Activated CD8-positive, alpha-beta T cell treated with anti-CD3 and anti-CD28 coated beads, Interleukin-2, amount 10 ng/mL, durations not matched to agents 7 days and 5 days (primary cell): ENCODE measurements at regions of chr19 and their contacts with region 1.

Region 1: GRCh38 chr19:38618590-38619360 is at the start of gene EIF3K:
- DNase-seq: peak; percentile 98
- ATAC-seq: peak; percentile 58
- H3K4me3 Mint-ChIP-seq: peak within 1 kb of the TSS; percentile 100
- H3K27ac Mint-ChIP-seq: peak within 1 kb of the TSS; percentile 99
- H3K4me1 Mint-ChIP-seq: peaks cover 53% of the 10 kb centered on the region
- H3K27me3 Mint-ChIP-seq: no peaks in the 10 kb centered on the region
- total RNA-seq, gene EIF3K: 325 to 352 TPM

Region 2: DNA sequence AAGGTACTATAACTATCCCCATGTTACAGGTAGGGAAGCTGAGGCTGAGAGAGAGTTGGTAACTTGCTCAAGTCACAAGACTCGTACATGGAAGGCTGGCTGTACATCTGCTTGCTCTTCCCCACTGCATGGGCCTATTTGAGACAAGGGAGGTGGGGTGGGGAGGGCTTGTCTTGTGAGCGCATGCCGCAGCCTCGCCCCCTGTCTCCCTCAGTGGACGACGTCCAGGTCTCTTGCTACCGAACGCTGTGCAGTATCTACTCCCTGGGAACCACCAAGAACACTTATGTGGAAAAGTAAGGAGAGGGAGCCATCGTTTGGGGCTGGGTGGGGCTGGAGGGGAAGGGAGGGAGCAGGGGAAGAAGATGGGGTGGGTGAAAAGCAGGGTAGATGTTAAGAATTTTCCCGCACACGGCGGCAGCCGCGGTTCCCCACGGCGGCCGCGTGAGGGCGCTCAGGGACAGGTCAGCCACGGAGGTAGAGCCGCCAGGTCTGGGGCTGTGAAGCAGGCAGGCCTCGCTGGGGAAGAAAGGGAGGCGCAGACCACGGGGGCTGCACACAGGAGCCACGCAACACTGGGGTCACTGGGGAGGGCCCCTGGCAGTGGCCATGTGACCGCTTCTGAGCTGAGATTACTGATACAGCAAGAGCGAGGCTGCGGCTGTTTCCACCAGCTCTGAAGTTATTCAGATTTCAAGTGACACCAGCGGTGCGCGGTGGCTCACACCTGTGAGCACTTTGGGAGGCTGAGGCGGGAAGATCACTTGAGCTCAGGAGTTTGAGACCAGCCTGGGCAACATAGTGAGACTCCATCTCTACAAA is 103.8 kb before region 1 on chr19:
- CTCF ChIA-PET with region 1: interaction called, 38 read pairs
- POLR2A ChIA-PET with region 1: no interaction called
- DNase-seq: peak; percentile 81
- ATAC-seq: peak; percentile 81
- H3K4me3 Mint-ChIP-seq: peak overlapping the region; percentile 8
- H3K27ac Mint-ChIP-seq: peak overlapping the region; percentile 49
- H3K4me1 Mint-ChIP-seq: peaks cover 30% of the 10 kb centered on the region
- H3K27me3 Mint-ChIP-seq: peaks cover 22% of the 10 kb centered on the region

Region 3: DNA sequence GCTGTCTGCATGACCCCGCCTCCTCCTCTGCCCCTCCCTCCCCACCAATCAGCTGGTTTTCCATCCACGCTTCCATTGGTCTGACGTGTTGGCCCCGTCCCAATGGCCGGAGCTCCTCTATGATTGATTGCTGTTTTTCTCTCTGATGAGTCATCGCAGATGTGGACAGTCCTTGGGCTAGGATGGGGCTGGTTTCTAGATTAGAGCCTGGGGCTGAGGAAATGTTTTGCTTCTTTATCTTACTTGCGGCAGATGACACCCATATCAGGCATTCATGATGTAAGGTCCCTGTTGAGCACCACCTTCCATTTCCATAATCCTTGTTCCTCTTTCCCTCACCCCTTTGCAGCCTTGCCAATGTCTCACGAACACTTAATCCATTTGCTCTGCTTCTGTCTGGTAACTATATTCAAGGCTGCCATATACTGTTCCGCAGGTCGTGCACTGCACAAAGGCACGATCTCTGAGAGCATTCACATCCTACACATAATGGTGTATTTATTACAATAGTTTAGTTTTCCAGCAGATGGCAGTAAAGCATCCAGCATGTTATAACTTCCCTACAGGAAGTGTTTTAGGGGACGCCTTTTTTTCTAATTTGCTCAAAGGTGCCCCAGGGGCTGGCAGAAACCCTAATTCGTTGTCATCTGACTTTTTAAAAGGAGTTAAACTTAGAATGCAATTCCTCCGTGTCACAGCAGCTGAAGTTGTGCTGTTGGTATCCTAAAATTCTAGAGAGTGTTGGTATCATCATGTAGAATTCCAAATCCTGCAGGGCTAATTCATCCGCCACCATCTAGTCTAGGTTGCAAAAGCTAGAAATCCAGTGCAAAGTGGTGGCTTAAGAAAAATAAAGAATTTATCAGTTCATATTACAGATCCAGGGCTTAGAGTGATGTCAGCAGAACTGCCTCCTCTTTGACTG is 74.5 kb before region 1 on chr19:
- CTCF ChIA-PET with region 1: interaction called, 16 read pairs
- POLR2A ChIA-PET with region 1: interaction called, 3 read pairs
- DNase-seq: peak; percentile 55
- ATAC-seq: peak; percentile 92
- H3K4me3 Mint-ChIP-seq: no peak overlapping the region
- H3K27ac Mint-ChIP-seq: peak overlapping the region; percentile 51
- H3K4me1 Mint-ChIP-seq: peaks cover 26% of the 10 kb centered on the region
- H3K27me3 Mint-ChIP-seq: peaks cover 3% of the 10 kb centered on the region